Ovary (tissue), 10 donors: ENCODE measurements at regions of chr2 and their contacts with region 1.

Region 1: DNA sequence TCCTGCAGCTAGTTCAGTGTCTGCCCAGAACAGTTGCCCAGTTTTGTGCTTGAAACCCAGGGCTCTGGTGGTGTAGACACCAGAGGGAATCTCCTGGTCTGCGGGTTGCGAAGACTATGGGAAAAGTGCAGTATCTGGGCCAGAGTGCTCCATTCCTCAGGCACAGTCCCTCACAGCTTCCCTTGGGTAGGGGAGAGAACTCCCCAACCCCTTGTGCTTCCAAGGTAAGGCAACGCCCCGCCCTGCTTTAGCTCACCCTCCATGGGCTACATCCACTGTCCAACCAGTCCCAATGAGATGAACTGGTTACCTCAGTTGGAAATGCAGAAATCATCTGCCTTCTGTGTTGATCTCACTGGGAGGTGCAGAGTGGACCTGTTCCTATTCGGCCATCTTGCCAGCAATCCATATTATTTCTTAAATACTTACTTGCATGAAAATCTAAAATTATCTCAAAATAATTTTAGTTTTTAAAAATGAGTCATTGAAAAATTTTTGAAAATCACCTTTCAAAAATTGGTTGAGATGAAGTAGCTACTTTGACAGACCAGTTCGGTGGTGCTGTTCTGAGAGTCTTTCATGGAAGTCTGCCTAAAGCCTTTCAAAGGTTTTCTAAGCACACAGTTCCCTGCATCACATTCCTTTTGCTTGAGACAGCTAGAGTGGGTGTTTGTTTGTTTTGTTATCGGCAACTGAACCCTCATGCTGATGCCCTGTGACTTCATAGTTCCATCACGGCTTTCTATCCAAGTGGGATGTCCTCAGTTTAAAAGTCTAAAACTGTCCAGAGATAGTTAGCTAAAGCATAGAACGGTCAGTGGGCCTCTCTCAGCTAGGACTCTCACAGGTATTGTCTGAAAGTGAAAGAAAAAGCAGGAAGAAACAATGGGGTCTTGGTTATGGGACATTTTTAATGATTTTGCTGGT is 337.6 kb downstream of the OSR1 start:
- DNase-seq: no peak
- H3K4me3 ChIP-seq: no peak overlapping the region
- H3K27ac ChIP-seq: no peak overlapping the region
- H3K4me1 ChIP-seq: peaks cover 2% of the 10 kb centered on the region
- H3K27me3 ChIP-seq: no peaks in the 10 kb centered on the region
- CTCF ChIP-seq: no peak
- EP300 ChIP-seq: no peak
- POLR2A ChIP-seq: no peak

Region 2: DNA sequence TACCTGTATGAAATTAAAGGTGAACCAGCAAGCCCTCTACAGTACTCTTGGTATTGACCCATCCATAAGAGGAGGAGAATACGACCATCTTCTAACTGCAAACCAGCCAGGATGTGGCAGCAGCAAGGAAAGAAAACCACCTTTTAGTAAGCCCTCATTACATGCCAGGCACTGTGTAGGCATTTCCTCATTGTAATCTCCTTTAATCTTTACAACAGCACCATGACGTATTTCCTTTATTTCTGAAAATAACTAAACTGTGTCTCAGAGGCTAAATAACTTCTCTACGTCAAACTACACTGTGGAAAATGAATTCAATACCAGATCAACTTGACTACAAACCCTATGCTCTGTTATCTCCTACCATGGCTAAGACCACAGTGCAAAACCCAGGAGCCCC is 950.9 kb after region 1 on chr2:
- intact Hi-C with region 1: loop called in 1 of 4 experiments (anchors 10 kb)
- DNase-seq: no peak
- H3K4me3 ChIP-seq: no peak overlapping the region
- H3K27ac ChIP-seq: no peak overlapping the region
- H3K4me1 ChIP-seq: no peaks in the 10 kb centered on the region
- H3K27me3 ChIP-seq: no peaks in the 10 kb centered on the region
- CTCF ChIP-seq: no peak
- EP300 ChIP-seq: no peak
- POLR2A ChIP-seq: no peak